ENCODE measurements at regions of chr6 and their contacts with region 1.

Region 1: GRCh38 chr6:110002676-110003075 is 24.6 kb downstream of the GPR6 start:
- DNase-seq: no peak
- ATAC-seq: no peak

Region 2: GRCh38 chr6:109854541-109855308 is 148.0 kb before region 1 on chr6:
- intact Hi-C with region 1: loop called (anchors 10 kb)
- DNase-seq: no peak
- ATAC-seq: no peak

Region 3: DNA sequence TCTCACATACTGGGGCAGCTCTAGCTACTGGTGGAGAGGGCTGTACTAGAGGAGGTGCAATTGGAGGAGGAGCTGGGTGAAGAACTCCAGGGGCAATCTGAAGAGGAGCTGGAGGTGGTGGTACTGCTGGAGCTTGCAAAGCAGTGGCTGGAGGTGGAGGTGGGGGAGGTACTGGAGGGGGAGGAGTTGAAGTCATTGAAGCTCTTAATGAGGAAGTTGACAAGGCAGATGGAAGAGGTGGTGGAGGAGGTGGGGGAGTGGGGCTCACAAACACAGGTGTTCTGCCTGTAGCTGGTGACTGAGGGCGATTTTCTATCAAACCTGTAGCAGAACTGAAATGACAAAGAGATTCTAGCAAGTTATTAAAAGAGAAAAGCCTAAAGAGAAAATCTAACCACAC is 99.2 kb after region 1 on chr6:
- intact Hi-C with region 1: no loop called
- DNase-seq: no peak
- ATAC-seq: no peak